SK-N-SH (cell line): ENCODE measurements at regions of chr5 and their contacts with region 1.

Region 1: GRCh38 chr5:57157666-57158065 is 16.2 kb upstream of the GPBP1 start:
- DNase-seq: no peak
- H3K4me3 ChIP-seq: no peak overlapping the region
- H3K27ac ChIP-seq: no peak overlapping the region
- H3K4me1 ChIP-seq: no peaks in the 10 kb centered on the region
- H3K27me3 ChIP-seq: no peaks in the 10 kb centered on the region
- CTCF ChIP-seq: no peak
- EP300 ChIP-seq: no peak
- RAD21 ChIP-seq: no peak

Region 2: DNA sequence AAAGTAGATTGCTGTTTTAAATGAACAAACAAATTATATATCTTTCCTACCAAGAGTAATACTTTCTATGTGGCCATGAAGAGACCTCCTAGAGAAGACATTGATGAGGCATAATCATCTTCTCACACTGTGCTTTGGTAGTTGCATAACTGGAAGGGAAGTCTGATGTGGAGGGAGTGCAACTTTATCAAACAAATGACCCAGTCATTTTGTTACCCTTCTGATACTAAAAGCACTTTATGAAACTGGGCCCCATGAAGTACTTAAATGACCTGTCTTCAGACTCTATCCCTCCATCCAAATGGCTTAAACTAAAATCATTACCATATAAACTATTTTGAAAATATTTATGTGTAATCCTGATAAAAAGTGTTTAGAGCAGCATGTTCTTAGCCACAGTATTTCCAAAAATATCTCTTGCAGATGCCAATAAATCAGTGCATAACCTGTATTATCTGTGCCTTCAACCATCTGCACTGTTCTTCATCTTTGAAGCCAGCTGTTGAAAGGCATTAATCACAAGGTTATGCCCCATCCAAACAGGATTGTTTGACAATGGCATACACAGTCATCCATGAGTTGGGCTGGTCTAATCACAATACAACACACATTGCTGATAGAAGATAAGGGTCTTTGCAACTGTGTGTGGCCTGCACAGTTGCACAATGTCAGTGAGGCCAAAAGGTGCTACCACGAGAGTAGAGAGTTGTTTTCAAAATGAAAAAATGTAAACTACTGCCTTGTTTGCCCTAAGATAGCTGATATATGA is 173.9 kb before region 1 on chr5:
- CTCF ChIA-PET with region 1: no interaction called
- POLR2A ChIA-PET with region 1: no interaction called
- DNase-seq: no peak
- H3K4me3 ChIP-seq: no peak overlapping the region
- H3K27ac ChIP-seq: no peak overlapping the region
- H3K4me1 ChIP-seq: no peaks in the 10 kb centered on the region
- H3K27me3 ChIP-seq: no peaks in the 10 kb centered on the region; the same call in 1 of the 2 replicates
- CTCF ChIP-seq: no peak
- EP300 ChIP-seq: no peak
- RAD21 ChIP-seq: no peak

Region 3: GRCh38 chr5:57137401-57137800 is 20.3 kb before region 1 on chr5:
- CTCF ChIA-PET with region 1: interaction called, 12 read pairs
- POLR2A ChIA-PET with region 1: no interaction called
- DNase-seq: no peak
- H3K4me3 ChIP-seq: no peak overlapping the region
- H3K27ac ChIP-seq: no peak overlapping the region
- H3K4me1 ChIP-seq: no peaks in the 10 kb centered on the region
- H3K27me3 ChIP-seq: no peaks in the 10 kb centered on the region; the same call in 1 of the 2 replicates
- CTCF ChIP-seq: no peak
- EP300 ChIP-seq: no peak
- RAD21 ChIP-seq: no peak

Region 4: DNA sequence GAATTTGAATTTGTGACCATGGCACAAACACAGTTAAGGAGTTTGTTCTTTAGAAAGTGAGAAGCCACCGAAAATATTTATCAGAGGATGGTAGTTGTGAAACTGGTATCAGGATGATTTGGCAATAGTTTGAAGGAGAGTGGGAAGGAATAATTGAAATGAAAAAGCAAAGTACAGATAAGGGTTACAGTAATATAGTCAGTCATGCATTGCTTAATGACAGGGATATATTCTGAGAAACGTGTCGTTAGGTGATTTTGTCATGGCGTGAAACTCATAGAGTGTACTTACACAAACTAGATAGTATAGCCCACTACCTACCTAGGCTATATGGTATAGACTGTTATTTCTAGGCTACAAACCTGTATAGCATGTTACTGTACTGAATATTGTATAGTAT is 100.4 kb after region 1 on chr5:
- CTCF ChIA-PET with region 1: no interaction called
- POLR2A ChIA-PET with region 1: no interaction called
- DNase-seq: no peak
- H3K4me3 ChIP-seq: no peak overlapping the region
- H3K27ac ChIP-seq: no peak overlapping the region
- H3K4me1 ChIP-seq: no peaks in the 10 kb centered on the region
- H3K27me3 ChIP-seq: no peaks in the 10 kb centered on the region
- CTCF ChIP-seq: no peak
- EP300 ChIP-seq: no peak
- RAD21 ChIP-seq: no peak